ENCODE measurements at regions of chr13 and their contacts with region 1.

Region 1: GRCh38 chr13:80894917-80895316 is 554.0 kb upstream of the SPRY2 start:
- DNase-seq: no peak
- H3K4me3 ChIP-seq: no peak overlapping the region
- H3K27ac ChIP-seq: peak overlapping the region in 33 of 59 donors; percentile 3 to 85 (median 63)
- H3K27me3 ChIP-seq: no peaks in the 10 kb centered on the region
- CTCF ChIP-seq: no peak

Region 2: GRCh38 chr13:80814541-80814940 is 80.4 kb before region 1 on chr13:
- intact Hi-C with region 1: loop called in 1 of 2 experiments (anchors 5 kb)
- DNase-seq: no peak
- H3K4me3 ChIP-seq: no peak overlapping the region
- H3K27ac ChIP-seq: peak overlapping the region in 25 of 59 donors; percentile 7 to 78 (median 59)
- H3K27me3 ChIP-seq: no peaks in the 10 kb centered on the region
- CTCF ChIP-seq: no peak

Measured in dorsolateral prefrontal cortex (tissue), 120 donors.